Thyroid gland (tissue), 4 donors: ENCODE measurements at regions of chr4 and their contacts with region 1.

Region 1: DNA sequence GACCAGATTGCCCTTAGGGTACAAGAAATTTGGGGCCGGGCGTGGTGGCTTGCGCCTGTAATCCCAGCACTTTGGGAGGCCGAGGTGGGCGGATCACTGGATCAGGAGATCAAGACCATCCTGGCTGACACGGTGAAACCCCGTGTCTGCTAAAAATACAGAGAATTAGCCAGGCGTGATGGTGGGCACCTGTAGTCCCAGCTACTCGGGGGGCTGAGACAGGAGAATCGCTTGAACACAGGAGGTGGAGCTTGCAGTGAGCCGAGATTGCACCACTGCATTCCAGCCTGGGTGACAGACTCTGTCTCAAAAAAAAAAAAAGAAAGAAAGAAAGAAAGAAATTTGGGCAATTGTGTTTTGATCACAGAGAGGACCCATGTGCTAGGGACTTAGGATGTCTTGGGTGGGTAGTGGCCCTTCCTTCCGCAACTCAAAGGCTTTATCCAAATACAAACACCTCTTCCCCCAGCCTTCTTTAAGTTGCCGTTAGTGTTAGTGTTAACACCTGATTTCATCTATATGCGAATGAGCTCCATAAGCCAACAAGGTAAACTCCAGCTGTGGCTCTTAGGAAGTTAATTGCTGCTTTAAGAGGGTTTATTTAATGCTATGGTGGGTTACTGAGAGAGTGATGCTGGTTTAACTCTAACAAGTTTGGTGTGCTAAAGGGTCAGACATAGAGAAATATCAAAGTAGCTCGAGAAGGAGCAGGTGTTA is 8.6 kb upstream of the CCDC110 start:
- DNase-seq: no peak
- H3K4me3 ChIP-seq: no peak overlapping the region
- H3K27ac ChIP-seq: no peak overlapping the region
- H3K4me1 ChIP-seq: no peaks in the 10 kb centered on the region
- H3K27me3 ChIP-seq: no peaks in the 10 kb centered on the region
- CTCF ChIP-seq: no peak
- POLR2A ChIP-seq: no peak

Region 2: GRCh38 chr4:186118582-186118981 is 638.4 kb after region 1 on chr4:
- intact Hi-C with region 1: loop called (anchors 5 kb)
- DNase-seq: no peak
- H3K4me3 ChIP-seq: no peak overlapping the region
- H3K27ac ChIP-seq: no peak overlapping the region
- H3K4me1 ChIP-seq: no peaks in the 10 kb centered on the region
- H3K27me3 ChIP-seq: no peaks in the 10 kb centered on the region
- CTCF ChIP-seq: no peak
- POLR2A ChIP-seq: no peak

Region 3: GRCh38 chr4:186161138-186161537 is 681.0 kb after region 1 on chr4:
- intact Hi-C with region 1: no loop called
- DNase-seq: no peak
- H3K4me3 ChIP-seq: no peak overlapping the region
- H3K27ac ChIP-seq: no peak overlapping the region
- H3K4me1 ChIP-seq: no peaks in the 10 kb centered on the region
- H3K27me3 ChIP-seq: no peaks in the 10 kb centered on the region
- CTCF ChIP-seq: no peak
- POLR2A ChIP-seq: no peak